ENCODE measurements at regions of chr17 and their contacts with region 1.

Region 1: GRCh38 chr17:27353461-27354050 is 59.6 kb downstream of the WSB1 start:
- DNase-seq: peak; percentile 92
- ATAC-seq: peak; percentile 93
- H3K4me3 Mint-ChIP-seq: peak overlapping the region; percentile 80
- H3K27ac Mint-ChIP-seq: peak overlapping the region; percentile 91
- H3K4me1 Mint-ChIP-seq: peaks cover 27% of the 10 kb centered on the region
- H3K27me3 Mint-ChIP-seq: no peaks in the 10 kb centered on the region

Region 2: DNA sequence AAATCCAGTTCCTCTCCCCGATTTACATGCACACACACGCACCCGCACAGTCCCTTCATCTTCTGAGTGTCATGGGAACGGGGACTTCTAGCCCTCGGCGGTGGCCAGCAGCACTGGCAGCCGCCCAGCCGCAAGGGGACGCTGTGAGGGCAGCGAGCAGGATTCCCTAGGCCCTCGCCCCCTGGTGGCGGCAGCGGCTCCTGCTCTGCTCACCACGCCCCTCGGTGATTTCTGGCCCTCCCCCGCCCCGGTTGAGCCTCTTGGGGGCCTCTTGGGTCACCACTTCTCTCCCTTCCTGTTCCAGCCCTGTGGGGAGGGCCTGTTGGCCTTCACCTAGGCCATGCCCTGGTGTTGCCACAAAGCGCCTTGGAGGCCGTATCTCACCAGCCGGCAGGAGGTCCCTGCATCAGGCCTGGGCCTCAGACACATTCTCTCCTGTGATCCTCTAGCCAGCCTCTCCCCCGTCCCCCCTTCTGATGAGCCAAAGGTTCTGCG is 27.5 kb after region 1 on chr17:
- CTCF ChIA-PET with region 1: interaction called, 13 read pairs
- DNase-seq: peak; percentile 83
- ATAC-seq: peak; percentile 91
- H3K4me3 Mint-ChIP-seq: no peak overlapping the region
- H3K27ac Mint-ChIP-seq: no peak overlapping the region
- H3K4me1 Mint-ChIP-seq: peaks cover 11% of the 10 kb centered on the region
- H3K27me3 Mint-ChIP-seq: peaks cover 30% of the 10 kb centered on the region

Region 3: GRCh38 chr17:27396941-27397340 is 43.4 kb after region 1 on chr17:
- CTCF ChIA-PET with region 1: no interaction called
- DNase-seq: no peak
- ATAC-seq: no peak
- H3K4me3 Mint-ChIP-seq: no peak overlapping the region
- H3K27ac Mint-ChIP-seq: no peak overlapping the region
- H3K4me1 Mint-ChIP-seq: no peaks in the 10 kb centered on the region
- H3K27me3 Mint-ChIP-seq: peaks cover 50% of the 10 kb centered on the region

Region 4: GRCh38 chr17:27413792-27414191 is 60.2 kb after region 1 on chr17:
- CTCF ChIA-PET with region 1: no interaction called
- DNase-seq: peak; percentile 2
- ATAC-seq: no peak
- H3K4me3 Mint-ChIP-seq: no peak overlapping the region
- H3K27ac Mint-ChIP-seq: no peak overlapping the region
- H3K4me1 Mint-ChIP-seq: peaks cover 1% of the 10 kb centered on the region
- H3K27me3 Mint-ChIP-seq: peaks cover 12% of the 10 kb centered on the region

Measured in activated CD8-positive, alpha-beta memory T cell treated with anti-CD3 and anti-CD28 coated beads, Interleukin-2, amount 10 ng/mL, durations not matched to agents 7 days and 5 days (primary cell).